ENCODE measurements at regions of chr15 and their contacts with region 1.

Region 1: DNA sequence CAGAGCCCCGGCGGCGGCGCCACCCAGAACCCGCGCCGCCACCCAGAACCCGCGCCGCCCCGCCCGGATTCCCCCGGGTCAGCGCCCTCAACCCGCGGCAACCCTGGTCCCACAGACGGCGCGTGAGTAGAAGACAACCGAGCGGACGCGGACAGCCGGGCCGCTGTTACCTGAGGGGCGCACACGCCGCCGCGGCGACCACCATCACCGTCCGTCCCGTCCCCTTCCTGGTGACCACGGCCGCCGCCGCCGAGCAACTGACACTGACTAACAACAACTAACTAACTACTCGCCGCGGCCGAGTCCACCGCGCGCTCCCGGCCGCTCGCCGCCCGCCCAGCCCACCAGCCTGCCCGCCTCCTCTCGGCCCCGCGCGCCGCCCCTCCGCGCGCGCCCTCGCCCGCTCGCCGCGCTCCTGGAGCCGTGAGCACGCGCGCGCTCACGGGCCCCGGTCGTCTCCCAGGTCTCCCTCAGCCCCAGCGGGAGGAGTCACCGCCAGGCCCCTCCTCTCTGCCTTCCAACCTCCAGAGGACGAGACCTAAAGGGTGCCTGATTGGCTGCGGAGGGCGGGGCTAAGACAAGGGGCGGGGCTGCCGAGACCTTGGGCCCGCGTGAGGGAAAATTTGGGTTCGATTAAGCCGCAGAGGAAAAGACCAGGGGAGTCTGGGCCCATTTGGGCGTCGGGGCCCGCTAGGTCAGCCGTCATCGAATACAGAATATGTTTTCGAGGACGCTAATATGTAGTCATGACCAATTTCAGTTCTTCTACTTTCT is at the start of gene PEAK1:
- DNase-seq: peak; percentile 100
- ATAC-seq: peak; percentile 99
- H3K4me3 Mint-ChIP-seq: peak within 1 kb of the TSS; percentile 95
- H3K27ac Mint-ChIP-seq: peak within 1 kb of the TSS; percentile 100
- H3K4me1 Mint-ChIP-seq: peaks cover 44% of the 10 kb centered on the region
- H3K27me3 Mint-ChIP-seq: no peaks in the 10 kb centered on the region
- total RNA-seq, gene PEAK1: 26.5 to 27.0 TPM

Region 2: GRCh38 chr15:76905013-76905839 is 514.8 kb before region 1 on chr15 and contains the start of gene SCAPER:
- CTCF ChIA-PET with region 1: no interaction called
- POLR2A ChIA-PET with region 1: interaction called, 4 read pairs
- intact Hi-C with region 1: loop called in 1 of 2 experiments (anchors 1 kb)
- DNase-seq: peak; percentile 96
- ATAC-seq: peak; percentile 92
- H3K4me3 Mint-ChIP-seq: peak within 1 kb of the TSS; percentile 87
- H3K27ac Mint-ChIP-seq: peak within 1 kb of the TSS; percentile 92
- H3K4me1 Mint-ChIP-seq: peaks cover 34% of the 10 kb centered on the region
- H3K27me3 Mint-ChIP-seq: no peaks in the 10 kb centered on the region
- total RNA-seq, gene SCAPER: 25.9 to 35.2 TPM

Region 3: GRCh38 chr15:76987926-76988860 is 431.8 kb before region 1 on chr15:
- CTCF ChIA-PET with region 1: no interaction called
- POLR2A ChIA-PET with region 1: no interaction called
- intact Hi-C with region 1: loop called in 1 of 2 experiments (anchors 1 kb)
- DNase-seq: peak; percentile 89
- ATAC-seq: peak; percentile 90
- H3K4me3 Mint-ChIP-seq: peak overlapping the region; percentile 56
- H3K27ac Mint-ChIP-seq: peak overlapping the region; percentile 98
- H3K4me1 Mint-ChIP-seq: peaks cover 48% of the 10 kb centered on the region
- H3K27me3 Mint-ChIP-seq: no peaks in the 10 kb centered on the region

Region 4: GRCh38 chr15:77186594-77187011 is 233.4 kb before region 1 on chr15:
- CTCF ChIA-PET with region 1: interaction called, 3 read pairs
- POLR2A ChIA-PET with region 1: no interaction called
- intact Hi-C with region 1: loop called (anchors 5 to 10 kb)
- DNase-seq: peak; percentile 30
- ATAC-seq: no peak
- H3K4me3 Mint-ChIP-seq: no peak overlapping the region
- H3K27ac Mint-ChIP-seq: no peak overlapping the region
- H3K4me1 Mint-ChIP-seq: peaks cover 55% of the 10 kb centered on the region
- H3K27me3 Mint-ChIP-seq: no peaks in the 10 kb centered on the region

Region 5: DNA sequence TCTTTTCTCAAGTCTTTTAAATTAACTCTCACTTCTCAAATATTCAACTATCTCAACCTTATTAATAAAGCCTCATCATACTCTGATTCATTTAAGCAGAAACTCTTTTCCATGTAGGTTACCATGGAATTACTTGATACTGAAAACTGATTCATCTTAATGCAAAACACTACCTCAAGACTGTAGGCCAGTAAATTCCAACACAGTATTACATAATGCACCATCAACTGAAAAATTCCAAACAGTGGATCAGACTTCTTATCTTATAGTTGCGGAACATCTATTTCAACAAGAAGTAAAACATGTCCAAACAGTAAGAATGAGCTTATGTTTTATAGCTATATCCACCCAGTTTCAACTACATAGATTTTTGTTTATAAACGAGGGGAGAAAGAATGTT is 124.6 kb before region 1 on chr15:
- CTCF ChIA-PET with region 1: no interaction called
- POLR2A ChIA-PET with region 1: no interaction called
- intact Hi-C with region 1: no loop called
- DNase-seq: no peak
- ATAC-seq: no peak
- H3K4me3 Mint-ChIP-seq: no peak overlapping the region
- H3K27ac Mint-ChIP-seq: no peak overlapping the region
- H3K4me1 Mint-ChIP-seq: no peaks in the 10 kb centered on the region
- H3K27me3 Mint-ChIP-seq: no peaks in the 10 kb centered on the region

Region 6: GRCh38 chr15:77409259-77410156 is 10.5 kb before region 1 on chr15:
- CTCF ChIA-PET with region 1: interaction called, 4 read pairs
- POLR2A ChIA-PET with region 1: interaction called, 5 read pairs
- intact Hi-C with region 1: loop called in 1 of 2 experiments (anchors 1 kb)
- DNase-seq: peak; percentile 46
- ATAC-seq: peak; percentile 98
- H3K4me3 Mint-ChIP-seq: peak overlapping the region; percentile 56
- H3K27ac Mint-ChIP-seq: peak overlapping the region; percentile 89
- H3K4me1 Mint-ChIP-seq: peaks cover 35% of the 10 kb centered on the region
- H3K27me3 Mint-ChIP-seq: no peaks in the 10 kb centered on the region

Region 7: DNA sequence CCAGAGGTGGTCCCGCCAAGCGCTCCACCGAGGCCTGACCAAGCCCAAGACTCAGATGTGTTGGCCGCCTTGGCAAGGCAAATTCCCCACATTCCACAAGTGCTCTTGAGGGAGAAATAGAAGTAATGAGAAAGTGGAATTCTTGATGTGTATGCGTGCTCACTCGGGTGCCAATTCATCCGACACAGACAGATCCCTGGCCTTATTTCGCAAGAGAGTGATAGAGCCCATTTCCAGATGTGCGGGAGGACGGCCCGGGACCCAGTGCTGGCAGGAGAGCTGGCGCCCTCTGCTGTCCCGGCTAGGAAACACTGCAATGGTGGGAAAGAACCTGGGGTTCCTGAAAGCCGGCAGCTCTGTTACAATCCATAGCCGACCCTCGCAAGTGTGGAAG is 76.7 kb after region 1 on chr15:
- CTCF ChIA-PET with region 1: no interaction called
- POLR2A ChIA-PET with region 1: no interaction called
- intact Hi-C with region 1: loop called (anchors 2 to 10 kb)
- DNase-seq: peak; percentile 86
- ATAC-seq: peak; percentile 66
- H3K4me3 Mint-ChIP-seq: no peak overlapping the region
- H3K27ac Mint-ChIP-seq: no peak overlapping the region
- H3K4me1 Mint-ChIP-seq: peaks cover 17% of the 10 kb centered on the region
- H3K27me3 Mint-ChIP-seq: no peaks in the 10 kb centered on the region

Measured in activated CD4-positive, alpha-beta T cell treated with anti-CD3 and anti-CD28 coated beads for 36 hours (primary cell).